B cell (primary cell): ENCODE measurements at regions of chr4 and their contacts with region 1.

Region 1: GRCh38 chr4:98995183-98996055 is at the start of gene METAP1:
- DNase-seq: peak; percentile 97
- ATAC-seq: peak; percentile 85
- H3K4me3 ChIP-seq: peak within 1 kb of the TSS; percentile 68 to 90 (median 83)
- H3K4me3 Mint-ChIP-seq: peak within 1 kb of the TSS; percentile 92
- H3K27ac ChIP-seq: peak within 1 kb of the TSS; percentile 86 to 89
- H3K27ac Mint-ChIP-seq: peak within 1 kb of the TSS; percentile 98
- H3K4me1 ChIP-seq: peaks cover 11 to 15% of the 10 kb centered on the region in 2 donors
- H3K4me1 Mint-ChIP-seq: peaks cover 29% of the 10 kb centered on the region
- H3K27me3 ChIP-seq: no peaks in the 10 kb centered on the region
- H3K27me3 Mint-ChIP-seq: peaks cover 4% of the 10 kb centered on the region
- CTCF ChIP-seq: peak; percentile 75
- total RNA-seq, gene METAP1: 40.0 and 42.6 TPM in 2 replicates

Region 2: DNA sequence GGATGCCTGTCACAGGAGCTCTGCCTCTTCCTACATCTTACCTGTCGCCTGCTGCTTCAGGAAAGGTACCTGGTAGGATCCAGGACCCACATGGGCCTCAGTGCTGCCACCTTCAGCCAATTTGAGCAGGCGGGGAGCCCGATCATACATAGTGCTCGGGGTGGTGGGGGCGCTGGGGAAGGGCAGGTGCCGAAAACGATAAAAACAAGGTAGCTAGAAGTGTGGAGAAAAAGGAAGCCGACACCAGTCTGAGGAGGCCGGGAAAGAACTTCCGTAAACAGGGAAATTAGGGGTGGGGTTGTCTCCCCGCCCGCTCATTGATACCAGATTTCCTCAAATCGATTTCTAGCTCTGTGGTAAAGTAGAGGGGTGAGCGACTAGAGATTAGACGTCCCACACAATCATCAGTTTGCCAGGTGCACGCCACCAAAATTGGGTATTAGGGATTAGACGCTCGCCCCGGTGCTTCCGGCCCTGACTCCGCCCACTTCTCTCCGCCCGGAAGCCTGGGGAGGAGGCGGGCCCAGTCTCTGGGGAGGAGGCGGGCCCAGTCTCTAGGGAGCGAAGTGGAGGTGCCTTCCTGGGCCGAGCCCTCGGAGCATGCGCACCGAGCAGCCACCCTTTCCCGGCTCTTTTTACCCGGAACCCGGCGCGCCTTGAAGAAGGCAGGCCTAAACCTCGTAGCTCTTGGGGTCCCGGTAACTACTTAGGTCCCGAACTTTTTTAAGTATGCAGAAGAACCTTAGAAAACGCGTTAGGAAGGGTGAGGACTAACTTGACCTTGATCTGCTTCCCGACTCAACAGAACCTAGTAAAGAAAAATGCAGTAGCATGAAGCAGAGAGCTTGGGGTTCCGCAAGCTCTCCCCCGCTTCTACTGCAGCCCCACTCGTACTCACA is 852.2 kb before region 1 on chr4 and contains the start of gene STPG2:
- CTCF ChIA-PET with region 1: interaction called, 15 read pairs
- POLR2A ChIA-PET with region 1: interaction called, 8 read pairs
- intact Hi-C with region 1: loop called (anchors 1 kb)
- DNase-seq: peak; percentile 97
- ATAC-seq: peak; percentile 98
- H3K4me3 ChIP-seq: peak within 1 kb of the TSS; percentile 69 to 86 (median 84)
- H3K4me3 Mint-ChIP-seq: peak within 1 kb of the TSS; percentile 94
- H3K27ac ChIP-seq: peak within 1 kb of the TSS; percentile 91 to 93
- H3K27ac Mint-ChIP-seq: peak within 1 kb of the TSS; percentile 96
- H3K4me1 ChIP-seq: peaks cover 15 to 18% of the 10 kb centered on the region in 2 donors
- H3K4me1 Mint-ChIP-seq: peaks cover 24% of the 10 kb centered on the region
- H3K27me3 ChIP-seq: no peaks in the 10 kb centered on the region
- H3K27me3 Mint-ChIP-seq: no peaks in the 10 kb centered on the region
- CTCF ChIP-seq: peak; percentile 77
- total RNA-seq, gene STPG2: 0.41 and 0.49 TPM in 2 replicates

Region 3: GRCh38 chr4:98467627-98468072 is 527.8 kb before region 1 on chr4:
- CTCF ChIA-PET with region 1: interaction called, 10 read pairs
- POLR2A ChIA-PET with region 1: no interaction called
- intact Hi-C with region 1: no loop called
- DNase-seq: peak; percentile 79
- ATAC-seq: peak; percentile 87
- H3K4me3 ChIP-seq: peak overlapping the region; percentile 1 to 55 (median 37)
- H3K4me3 Mint-ChIP-seq: peak overlapping the region; percentile 79
- H3K27ac ChIP-seq: no peak overlapping the region
- H3K27ac Mint-ChIP-seq: peak overlapping the region; percentile 16
- H3K4me1 ChIP-seq: peaks cover 6 to 7% of the 10 kb centered on the region in 2 donors
- H3K4me1 Mint-ChIP-seq: peaks cover 8% of the 10 kb centered on the region
- H3K27me3 ChIP-seq: peaks cover 0 to 3% (median 0%) of the 10 kb centered on the region in 4 experiments
- H3K27me3 Mint-ChIP-seq: peaks cover 4% of the 10 kb centered on the region
- CTCF ChIP-seq: peak; percentile 72

Region 4: DNA sequence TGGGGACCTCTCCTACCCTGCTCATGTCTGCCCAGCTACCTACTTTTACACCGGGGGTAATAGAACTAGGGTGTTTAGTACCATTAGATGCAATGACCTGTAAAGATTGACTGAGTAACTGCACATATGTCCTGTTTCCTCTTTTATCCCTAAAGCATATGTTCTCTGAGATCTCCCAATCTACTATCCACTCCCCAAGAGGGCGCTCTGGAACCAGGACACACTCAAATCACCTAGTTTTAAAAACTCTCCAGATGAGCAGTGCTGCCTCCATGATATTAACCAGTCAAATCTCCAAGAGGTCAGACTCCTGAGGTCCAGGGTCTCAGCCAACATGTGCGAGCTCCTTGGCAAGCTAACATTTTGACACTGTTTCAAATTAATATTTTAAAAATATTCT is 250.1 kb before region 1 on chr4:
- CTCF ChIA-PET with region 1: no interaction called
- POLR2A ChIA-PET with region 1: no interaction called
- intact Hi-C with region 1: no loop called
- DNase-seq: no peak
- ATAC-seq: no peak
- H3K4me3 ChIP-seq: no peak overlapping the region
- H3K4me3 Mint-ChIP-seq: no peak overlapping the region
- H3K27ac ChIP-seq: no peak overlapping the region
- H3K27ac Mint-ChIP-seq: no peak overlapping the region
- H3K4me1 ChIP-seq: no peaks in the 10 kb centered on the region
- H3K4me1 Mint-ChIP-seq: no peaks in the 10 kb centered on the region
- H3K27me3 ChIP-seq: no peaks in the 10 kb centered on the region
- H3K27me3 Mint-ChIP-seq: no peaks in the 10 kb centered on the region
- CTCF ChIP-seq: no peak

Region 5: DNA sequence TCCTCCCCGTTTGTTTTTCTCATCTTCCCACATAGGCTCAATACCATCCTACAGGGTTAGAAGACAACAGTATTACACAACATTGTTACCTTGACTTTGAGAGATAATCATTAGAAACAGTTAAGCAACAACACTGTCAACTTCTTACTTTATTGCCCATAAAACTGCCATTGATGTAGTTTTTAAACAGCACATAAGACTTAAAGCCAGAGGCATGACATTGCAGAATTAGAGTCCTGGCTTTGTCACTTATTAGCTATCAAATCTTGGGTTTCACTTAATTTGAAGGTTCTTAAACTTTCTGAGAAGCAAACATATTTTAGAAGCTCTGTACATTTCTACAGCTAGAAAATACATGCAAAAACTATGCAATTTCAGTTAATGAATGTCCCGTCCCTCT is 108.3 kb before region 1 on chr4:
- CTCF ChIA-PET with region 1: no interaction called
- POLR2A ChIA-PET with region 1: no interaction called
- intact Hi-C with region 1: no loop called
- DNase-seq: no peak
- ATAC-seq: no peak
- H3K4me3 ChIP-seq: no peak overlapping the region
- H3K4me3 Mint-ChIP-seq: no peak overlapping the region
- H3K27ac ChIP-seq: no peak overlapping the region
- H3K27ac Mint-ChIP-seq: no peak overlapping the region
- H3K4me1 ChIP-seq: no peaks in the 10 kb centered on the region
- H3K4me1 Mint-ChIP-seq: no peaks in the 10 kb centered on the region
- H3K27me3 ChIP-seq: no peaks in the 10 kb centered on the region
- H3K27me3 Mint-ChIP-seq: no peaks in the 10 kb centered on the region
- CTCF ChIP-seq: no peak

Region 6: DNA sequence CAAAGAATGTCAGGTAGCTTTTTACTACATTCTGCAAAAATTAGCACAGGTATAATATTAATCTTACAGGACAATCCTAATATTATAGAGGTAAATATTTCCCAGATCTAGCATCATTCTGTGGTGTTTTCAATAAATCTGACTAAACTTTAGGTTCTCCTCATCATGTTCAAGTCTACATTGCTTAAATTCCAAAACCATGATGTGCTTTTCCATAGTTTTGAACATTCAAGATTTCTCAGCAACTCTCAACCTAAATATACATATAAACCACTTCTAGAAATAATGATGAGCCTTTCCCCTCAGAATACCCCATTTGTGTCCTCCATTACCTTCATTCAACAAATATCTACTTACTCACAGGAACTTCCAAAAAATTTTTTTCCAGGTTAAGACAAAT is 89.6 kb before region 1 on chr4:
- CTCF ChIA-PET with region 1: no interaction called
- POLR2A ChIA-PET with region 1: no interaction called
- intact Hi-C with region 1: no loop called
- DNase-seq: no peak
- ATAC-seq: no peak
- H3K4me3 ChIP-seq: no peak overlapping the region
- H3K4me3 Mint-ChIP-seq: no peak overlapping the region
- H3K27ac ChIP-seq: no peak overlapping the region
- H3K27ac Mint-ChIP-seq: no peak overlapping the region
- H3K4me1 ChIP-seq: peaks cover 8 to 23% of the 10 kb centered on the region in 2 donors
- H3K4me1 Mint-ChIP-seq: peaks cover 64% of the 10 kb centered on the region
- H3K27me3 ChIP-seq: no peaks in the 10 kb centered on the region
- H3K27me3 Mint-ChIP-seq: no peaks in the 10 kb centered on the region
- CTCF ChIP-seq: no peak

Region 7: GRCh38 chr4:99038213-99038612 is 42.8 kb after region 1 on chr4:
- CTCF ChIA-PET with region 1: interaction called, 3 read pairs
- POLR2A ChIA-PET with region 1: no interaction called
- intact Hi-C with region 1: loop called (anchors 5 kb)
- DNase-seq: no peak
- ATAC-seq: no peak
- H3K4me3 ChIP-seq: no peak overlapping the region
- H3K4me3 Mint-ChIP-seq: no peak overlapping the region
- H3K27ac ChIP-seq: no peak overlapping the region
- H3K27ac Mint-ChIP-seq: no peak overlapping the region
- H3K4me1 ChIP-seq: peaks cover 2 to 5% of the 10 kb centered on the region in 2 donors
- H3K4me1 Mint-ChIP-seq: peaks cover 5% of the 10 kb centered on the region
- H3K27me3 ChIP-seq: no peaks in the 10 kb centered on the region
- H3K27me3 Mint-ChIP-seq: no peaks in the 10 kb centered on the region
- CTCF ChIP-seq: no peak

Region 8: DNA sequence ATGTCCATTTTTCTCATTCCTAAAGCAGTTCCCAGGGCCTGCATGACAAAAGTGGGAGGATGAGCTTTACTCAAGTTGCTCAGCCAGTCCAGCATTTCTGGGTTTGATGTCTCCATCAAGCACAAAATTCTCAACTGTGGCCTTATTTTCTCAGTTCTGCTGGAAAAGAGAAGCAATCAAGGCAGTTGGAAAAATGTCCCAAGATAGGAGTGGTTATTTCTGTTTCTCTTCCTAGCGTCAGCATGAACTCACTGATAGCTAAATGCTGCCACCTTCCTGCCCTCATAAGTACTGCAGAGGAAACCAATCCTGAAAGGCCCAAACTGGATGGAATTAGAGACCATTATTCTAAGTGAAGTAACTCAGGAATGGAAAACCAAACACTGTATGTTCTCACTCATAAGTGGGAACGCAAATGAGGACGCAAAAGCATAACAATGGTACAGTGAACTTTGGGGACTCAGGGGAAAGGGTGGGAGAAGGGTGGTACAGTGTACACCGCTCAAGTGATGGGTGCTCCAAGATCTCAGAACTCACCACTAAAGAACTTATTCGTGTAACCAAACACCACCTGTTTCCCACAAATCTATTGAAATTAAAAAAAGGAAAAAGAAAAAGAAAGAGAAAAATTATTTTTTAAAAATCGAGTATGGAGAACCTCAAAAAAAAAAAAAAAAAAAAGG is 410.2 kb after region 1 on chr4:
- CTCF ChIA-PET with region 1: interaction called, 3 read pairs
- POLR2A ChIA-PET with region 1: no interaction called
- intact Hi-C with region 1: loop called (anchors 2 kb)
- DNase-seq: peak; percentile 66
- ATAC-seq: peak; percentile 54
- H3K4me3 ChIP-seq: no peak overlapping the region
- H3K4me3 Mint-ChIP-seq: no peak overlapping the region
- H3K27ac ChIP-seq: no peak overlapping the region
- H3K27ac Mint-ChIP-seq: no peak overlapping the region
- H3K4me1 ChIP-seq: no peaks in the 10 kb centered on the region
- H3K4me1 Mint-ChIP-seq: peaks cover 2% of the 10 kb centered on the region
- H3K27me3 ChIP-seq: no peaks in the 10 kb centered on the region
- H3K27me3 Mint-ChIP-seq: no peaks in the 10 kb centered on the region
- CTCF ChIP-seq: peak; percentile 94

Region 9: DNA sequence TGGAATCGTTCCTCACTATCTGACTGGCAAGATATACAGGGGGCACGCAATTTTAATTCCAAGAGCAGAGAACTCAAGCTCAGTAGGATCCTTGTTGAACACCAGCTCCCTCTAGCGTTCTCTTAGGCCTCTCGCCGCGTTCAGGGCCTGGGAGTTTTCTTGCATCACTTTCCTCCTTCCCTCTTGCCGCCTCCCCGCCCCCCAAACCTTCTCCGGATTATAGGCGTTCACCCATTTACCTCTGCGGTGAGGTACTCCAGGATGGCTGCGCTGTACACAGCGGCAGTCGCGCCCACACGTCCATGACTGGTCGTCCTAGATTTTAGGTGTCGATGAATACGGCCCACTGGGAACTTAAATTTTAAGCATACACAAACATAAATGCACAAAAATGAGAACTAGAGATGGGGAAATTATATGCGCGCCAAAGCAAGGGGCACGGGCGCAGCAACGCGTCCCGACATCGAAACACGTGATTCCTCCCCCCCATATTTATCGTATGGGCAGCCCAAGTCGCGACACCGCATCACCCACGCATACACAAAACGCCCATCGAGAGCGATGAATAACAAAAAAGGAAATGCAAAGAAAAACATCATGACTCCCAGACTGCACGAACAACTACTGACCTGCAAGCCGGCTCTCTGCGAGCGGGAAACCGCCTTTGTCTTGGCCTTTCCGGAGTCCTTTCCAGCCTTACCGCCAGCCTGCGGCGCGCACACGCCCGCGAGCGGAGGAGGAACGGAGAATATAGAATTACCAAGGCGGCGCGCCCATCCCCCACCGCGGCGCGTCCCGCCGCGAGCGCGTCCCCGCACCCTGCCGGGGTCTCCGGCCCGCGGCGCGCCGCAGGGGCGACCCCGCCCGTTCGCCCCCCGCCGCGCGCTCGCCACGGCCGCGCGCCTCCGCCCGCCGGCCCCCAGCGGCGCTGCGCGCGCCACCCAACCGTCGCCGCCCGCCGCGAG is 953.9 kb after region 1 on chr4:
- CTCF ChIA-PET with region 1: interaction called, 3 read pairs
- POLR2A ChIA-PET with region 1: no interaction called
- intact Hi-C with region 1: loop called (anchors 5 kb)
- DNase-seq: peak; percentile 93
- ATAC-seq: peak; percentile 26
- H3K4me3 ChIP-seq: peak overlapping the region; percentile 84 to 96 (median 84)
- H3K4me3 Mint-ChIP-seq: no peak overlapping the region
- H3K27ac ChIP-seq: peak overlapping the region; percentile 83 to 93
- H3K27ac Mint-ChIP-seq: no peak overlapping the region
- H3K4me1 ChIP-seq: peaks cover 32 to 37% of the 10 kb centered on the region in 2 donors
- H3K4me1 Mint-ChIP-seq: peaks cover 33% of the 10 kb centered on the region
- H3K27me3 ChIP-seq: no peaks in the 10 kb centered on the region
- H3K27me3 Mint-ChIP-seq: no peaks in the 10 kb centered on the region
- CTCF ChIP-seq: peak; percentile 88